Aorta (tissue), 5 donors: ENCODE measurements at regions of chr4 and their contacts with region 1.

Region 1: GRCh38 chr4:42519803-42520417 is 122.6 kb downstream of the SHISA3 start:
- DNase-seq: no peak
- ATAC-seq: no peak
- H3K4me3 ChIP-seq: no peak overlapping the region
- H3K27ac ChIP-seq: no peak overlapping the region
- H3K4me1 ChIP-seq: no peaks in the 10 kb centered on the region
- H3K27me3 ChIP-seq: no peaks in the 10 kb centered on the region

Region 2: GRCh38 chr4:42371306-42372252 is 148.3 kb before region 1 on chr4:
- intact Hi-C with region 1: loop called (anchors 1 to 2 kb)
- DNase-seq: no peak
- ATAC-seq: no peak
- H3K4me3 ChIP-seq: no peak overlapping the region
- H3K27ac ChIP-seq: no peak overlapping the region
- H3K4me1 ChIP-seq: no peaks in the 10 kb centered on the region
- H3K27me3 ChIP-seq: no peaks in the 10 kb centered on the region

Region 3: GRCh38 chr4:42396752-42397634 is 122.9 kb before region 1 on chr4 and contains the start of gene SHISA3:
- intact Hi-C with region 1: no loop called
- DNase-seq: peak in 1 of 2 donors; percentile 51
- ATAC-seq: peak; percentile 51
- H3K4me3 ChIP-seq: peak within 1 kb of the TSS; percentile 20 to 27
- H3K27ac ChIP-seq: no peak within 1 kb of the TSS
- H3K4me1 ChIP-seq: no peaks in the 10 kb centered on the region
- H3K27me3 ChIP-seq: peaks cover 0 to 3% of the 10 kb centered on the region in 2 donors
- total RNA-seq, gene SHISA3: 2.1 to 5.5 TPM

Region 4: GRCh38 chr4:42566835-42567234 is 46.9 kb after region 1 on chr4:
- intact Hi-C with region 1: no loop called
- DNase-seq: no peak
- ATAC-seq: no peak
- H3K4me3 ChIP-seq: no peak overlapping the region
- H3K27ac ChIP-seq: no peak overlapping the region
- H3K4me1 ChIP-seq: no peaks in the 10 kb centered on the region
- H3K27me3 ChIP-seq: no peaks in the 10 kb centered on the region